Activated CD8-positive, alpha-beta T cell treated with anti-CD3 and anti-CD28 coated beads for 36 hours (primary cell): ENCODE measurements at regions of chr13 and their contacts with region 1.

Region 1: DNA sequence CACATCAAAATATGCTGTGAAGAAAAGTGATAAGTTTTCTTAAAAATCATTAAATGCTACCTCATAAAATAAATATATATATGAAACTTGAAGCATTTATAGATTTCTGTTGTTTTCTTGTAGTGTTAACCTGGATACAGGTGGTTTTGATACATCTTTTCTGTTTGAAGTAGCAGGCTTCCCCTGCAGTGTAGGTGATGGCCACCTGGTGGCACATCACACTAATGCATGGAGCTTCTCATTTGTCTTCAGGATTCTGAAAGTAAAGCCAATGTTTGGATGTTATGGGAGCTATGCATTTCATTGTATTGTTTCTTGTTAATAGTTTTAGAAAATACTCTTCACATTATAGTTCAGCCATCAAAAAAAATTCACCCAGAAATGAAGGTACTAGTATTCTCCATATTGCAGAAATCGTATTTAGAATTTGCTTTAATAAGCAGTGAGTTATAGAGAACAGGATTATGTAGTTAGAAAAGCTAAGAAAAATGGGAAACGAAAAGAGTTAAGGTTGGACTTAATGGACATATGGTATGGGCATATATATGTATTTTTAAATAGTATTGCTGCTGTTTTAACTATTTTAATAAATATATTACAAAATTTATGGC is 18.7 kb downstream of the GPR180 start:
- DNase-seq: peak; percentile 57
- ATAC-seq: peak; percentile 66
- H3K4me3 Mint-ChIP-seq: no peak overlapping the region
- H3K27ac Mint-ChIP-seq: no peak overlapping the region
- H3K4me1 Mint-ChIP-seq: peaks cover 8% of the 10 kb centered on the region
- H3K27me3 Mint-ChIP-seq: no peaks in the 10 kb centered on the region
- CTCF ChIP-seq: peak; percentile 82

Region 2: DNA sequence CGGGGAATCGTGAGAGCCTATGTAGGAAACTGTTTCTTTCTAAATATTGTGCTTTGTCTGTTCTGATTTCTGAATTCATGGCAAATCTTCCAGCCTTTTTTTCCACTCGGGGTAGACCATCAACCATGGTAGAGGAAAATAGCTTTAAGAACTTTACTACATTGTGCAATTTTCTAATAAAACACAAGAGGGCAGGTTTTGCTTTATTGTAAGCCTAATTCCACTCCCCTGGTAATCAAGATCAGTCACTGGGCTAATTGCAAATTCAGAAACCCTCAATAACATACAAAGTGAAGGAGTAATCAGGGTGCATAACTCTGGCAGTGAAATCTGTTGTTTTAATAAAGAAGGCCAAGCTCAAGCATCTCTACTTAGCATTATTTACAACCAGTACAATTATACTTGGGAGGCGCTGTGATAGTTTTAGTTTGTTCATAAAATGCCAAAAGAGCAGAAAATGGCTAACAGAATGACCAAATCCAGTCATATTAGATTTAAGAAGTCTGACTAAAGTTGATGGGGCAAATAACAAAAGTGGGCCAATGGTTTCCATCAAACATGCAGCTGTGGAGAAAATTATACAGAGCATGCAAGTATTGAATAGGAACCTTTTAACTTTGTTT is 184.7 kb before region 1 on chr13:
- CTCF ChIA-PET with region 1: interaction called, 232 read pairs
- POLR2A ChIA-PET with region 1: no interaction called
- intact Hi-C with region 1: loop called (anchors 1 kb)
- DNase-seq: no peak
- ATAC-seq: peak; percentile 66
- H3K4me3 Mint-ChIP-seq: no peak overlapping the region
- H3K27ac Mint-ChIP-seq: no peak overlapping the region
- H3K4me1 Mint-ChIP-seq: peaks cover 33% of the 10 kb centered on the region
- H3K27me3 Mint-ChIP-seq: no peaks in the 10 kb centered on the region
- CTCF ChIP-seq: peak; percentile 74

Region 3: DNA sequence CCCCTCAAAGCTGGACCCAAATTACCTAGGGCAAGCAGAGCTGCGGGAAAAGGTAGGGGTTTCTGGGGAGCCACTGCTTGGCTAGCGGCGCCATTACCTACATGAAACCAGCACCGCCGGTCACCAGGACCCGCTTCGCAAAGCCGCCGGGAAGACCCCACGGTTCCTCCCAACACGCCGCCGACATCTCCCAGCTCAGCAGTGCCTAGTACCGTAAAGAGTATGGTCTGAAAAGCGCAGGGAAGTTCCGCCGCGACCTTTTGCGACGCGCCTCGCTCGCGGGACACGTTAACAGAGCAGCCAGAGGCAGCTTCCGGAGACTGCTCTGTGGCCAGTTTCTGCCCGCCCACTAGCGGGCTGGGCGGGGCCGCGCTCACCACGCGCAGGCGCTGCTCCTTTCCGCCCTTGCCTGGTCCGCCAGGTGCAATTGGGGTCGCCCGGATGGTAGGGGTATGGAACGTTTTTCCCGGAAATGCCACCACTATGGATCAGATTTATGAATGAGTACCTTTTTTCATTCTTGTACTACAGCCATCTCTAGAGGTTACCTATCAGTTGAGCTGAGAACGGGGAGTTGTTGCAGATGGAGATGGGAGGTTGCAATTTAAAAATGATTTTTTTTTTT is 24.3 kb before region 1 on chr13 and contains the start of gene TGDS:
- CTCF ChIA-PET with region 1: interaction called, 40 read pairs
- POLR2A ChIA-PET with region 1: interaction called, 3 read pairs
- intact Hi-C with region 1: no loop called
- DNase-seq: peak; percentile 95
- ATAC-seq: peak; percentile 95
- H3K4me3 Mint-ChIP-seq: peak within 1 kb of the TSS; percentile 97
- H3K27ac Mint-ChIP-seq: peak within 1 kb of the TSS; percentile 93
- H3K4me1 Mint-ChIP-seq: peaks cover 36% of the 10 kb centered on the region
- H3K27me3 Mint-ChIP-seq: no peaks in the 10 kb centered on the region
- CTCF ChIP-seq: no peak
- total RNA-seq, gene TGDS: 24.0 to 27.0 TPM

Region 4: GRCh38 chr13:94601446-94602431 is 18.7 kb before region 1 on chr13 and contains the start of gene GPR180:
- CTCF ChIA-PET with region 1: interaction called, 40 read pairs
- POLR2A ChIA-PET with region 1: interaction called, 3 read pairs
- intact Hi-C with region 1: no loop called
- DNase-seq: peak; percentile 97
- ATAC-seq: peak; percentile 100
- H3K4me3 Mint-ChIP-seq: peak within 1 kb of the TSS; percentile 84
- H3K27ac Mint-ChIP-seq: peak within 1 kb of the TSS; percentile 87
- H3K4me1 Mint-ChIP-seq: peaks cover 32% of the 10 kb centered on the region
- H3K27me3 Mint-ChIP-seq: no peaks in the 10 kb centered on the region
- CTCF ChIP-seq: no peak
- total RNA-seq, gene GPR180: 7.5 to 7.7 TPM

Region 5: DNA sequence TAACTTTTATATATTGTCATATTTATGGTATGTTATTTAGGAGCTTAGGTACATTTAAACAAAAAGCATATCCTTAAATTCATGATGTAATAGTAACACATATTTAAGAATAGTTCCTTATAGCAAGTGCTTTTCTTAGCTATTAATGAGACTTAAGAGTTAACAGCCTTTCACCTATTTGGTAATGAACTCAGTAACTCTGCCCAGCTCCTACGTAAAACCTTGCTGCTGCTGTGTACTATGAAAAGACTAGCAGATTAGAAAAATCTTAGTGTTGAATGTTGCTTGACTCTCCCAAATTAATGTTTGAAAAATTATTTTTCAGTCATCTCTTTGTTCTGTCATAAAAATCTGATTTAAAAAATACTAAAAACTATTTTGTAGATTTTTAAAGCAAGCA is 11.8 kb before region 1 on chr13:
- CTCF ChIA-PET with region 1: interaction called, 40 read pairs
- POLR2A ChIA-PET with region 1: interaction called, 3 read pairs
- intact Hi-C with region 1: no loop called
- DNase-seq: no peak
- ATAC-seq: no peak
- H3K4me3 Mint-ChIP-seq: no peak overlapping the region
- H3K27ac Mint-ChIP-seq: no peak overlapping the region
- H3K4me1 Mint-ChIP-seq: peaks cover 25% of the 10 kb centered on the region
- H3K27me3 Mint-ChIP-seq: no peaks in the 10 kb centered on the region
- CTCF ChIP-seq: no peak

Region 6: GRCh38 chr13:94632227-94632980 is 12.0 kb after region 1 on chr13:
- CTCF ChIA-PET with region 1: interaction called, 24 read pairs
- POLR2A ChIA-PET with region 1: no interaction called
- intact Hi-C with region 1: no loop called
- DNase-seq: no peak
- ATAC-seq: peak; percentile 47
- H3K4me3 Mint-ChIP-seq: no peak overlapping the region
- H3K27ac Mint-ChIP-seq: no peak overlapping the region
- H3K4me1 Mint-ChIP-seq: peaks cover 4% of the 10 kb centered on the region
- H3K27me3 Mint-ChIP-seq: no peaks in the 10 kb centered on the region
- CTCF ChIP-seq: no peak

Region 7: DNA sequence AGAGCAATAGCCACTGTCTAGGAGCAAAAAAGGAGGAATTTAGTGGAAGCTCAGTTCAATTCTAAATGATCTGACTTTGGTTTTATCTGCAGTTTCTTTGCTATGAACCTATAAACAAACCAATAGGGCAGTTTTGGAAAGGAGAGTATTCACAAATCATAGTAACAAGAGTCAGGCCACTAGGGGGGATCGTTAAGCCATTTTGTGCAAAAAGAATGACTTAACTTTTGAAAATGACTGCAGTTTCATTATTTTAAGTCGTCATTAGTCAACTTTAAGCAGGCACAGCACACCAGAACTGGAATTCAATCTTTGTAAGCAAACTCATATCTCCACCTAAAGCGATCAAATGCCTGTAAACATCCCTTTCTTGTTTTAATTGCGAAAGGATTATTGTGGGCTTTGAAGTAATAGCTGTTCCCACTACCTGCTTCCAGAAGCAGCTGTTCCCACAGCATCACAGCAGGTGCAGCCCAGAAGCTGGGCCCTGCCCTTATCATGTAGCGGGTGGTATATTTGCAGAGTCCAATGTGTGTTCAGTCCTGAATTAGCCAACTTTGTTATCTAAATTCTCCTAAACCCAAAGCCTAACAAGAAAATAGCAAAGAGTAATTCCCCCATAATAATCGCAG is 40.4 kb after region 1 on chr13:
- CTCF ChIA-PET with region 1: interaction called, 11 read pairs
- POLR2A ChIA-PET with region 1: no interaction called
- intact Hi-C with region 1: no loop called
- DNase-seq: peak; percentile 39
- ATAC-seq: no peak
- H3K4me3 Mint-ChIP-seq: no peak overlapping the region
- H3K27ac Mint-ChIP-seq: no peak overlapping the region
- H3K4me1 Mint-ChIP-seq: peaks cover 20% of the 10 kb centered on the region
- H3K27me3 Mint-ChIP-seq: peaks cover 32% of the 10 kb centered on the region
- CTCF ChIP-seq: peak; percentile 17